Activated CD8-positive, alpha-beta T cell treated with anti-CD3 and anti-CD28 coated beads for 36 hours (primary cell): ENCODE measurements at regions of chr6 and their contacts with region 1.

Region 1: DNA sequence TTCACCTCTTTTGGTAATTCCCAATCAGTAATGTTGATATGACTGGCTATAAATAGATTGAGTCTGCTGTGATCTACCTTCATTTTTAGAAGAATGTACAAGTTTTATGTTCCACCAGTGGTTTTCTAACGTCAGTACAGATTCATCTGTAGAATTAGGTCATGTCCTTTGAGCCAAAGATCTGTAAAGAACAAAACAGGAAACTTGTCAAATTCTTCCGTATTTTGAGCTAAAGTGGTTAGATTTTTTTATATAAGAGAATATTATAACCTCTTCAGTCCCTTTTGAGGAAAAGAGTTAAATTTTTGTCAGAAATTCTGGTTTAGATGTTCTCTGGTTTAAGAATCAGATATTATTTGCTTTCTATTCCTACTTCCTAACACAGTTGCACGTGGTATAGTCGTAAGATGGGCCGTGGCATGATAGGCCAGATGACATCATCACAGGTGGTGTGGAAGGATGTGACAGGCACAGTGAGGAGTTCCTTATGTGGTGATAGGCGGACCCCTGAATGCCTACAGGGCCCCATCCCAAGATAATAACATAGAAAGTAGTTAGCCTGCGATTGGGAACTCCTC is 62.3 kb downstream of the SNX9 start:
- DNase-seq: peak; percentile 84
- ATAC-seq: peak; percentile 89
- H3K4me3 Mint-ChIP-seq: peak overlapping the region; percentile 33
- H3K27ac Mint-ChIP-seq: peak overlapping the region; percentile 93
- H3K4me1 Mint-ChIP-seq: peaks cover 71% of the 10 kb centered on the region
- H3K27me3 Mint-ChIP-seq: no peaks in the 10 kb centered on the region
- CTCF ChIP-seq: no peak

Region 2: GRCh38 chr6:157840776-157841175 is 44.5 kb before region 1 on chr6:
- CTCF ChIA-PET with region 1: no interaction called
- POLR2A ChIA-PET with region 1: no interaction called
- intact Hi-C with region 1: no loop called
- DNase-seq: no peak
- ATAC-seq: no peak
- H3K4me3 Mint-ChIP-seq: no peak overlapping the region
- H3K27ac Mint-ChIP-seq: no peak overlapping the region
- H3K4me1 Mint-ChIP-seq: peaks cover 82% of the 10 kb centered on the region
- H3K27me3 Mint-ChIP-seq: no peaks in the 10 kb centered on the region
- CTCF ChIP-seq: no peak

Region 3: GRCh38 chr6:157898169-157898568 is 12.9 kb after region 1 on chr6:
- CTCF ChIA-PET with region 1: interaction called, 18 read pairs
- POLR2A ChIA-PET with region 1: interaction called, 8 read pairs
- intact Hi-C with region 1: no loop called
- DNase-seq: peak; percentile 47
- ATAC-seq: peak; percentile 54
- H3K4me3 Mint-ChIP-seq: no peak overlapping the region
- H3K27ac Mint-ChIP-seq: peak overlapping the region; percentile 25
- H3K4me1 Mint-ChIP-seq: peaks cover 19% of the 10 kb centered on the region
- H3K27me3 Mint-ChIP-seq: no peaks in the 10 kb centered on the region
- CTCF ChIP-seq: no peak